ENCODE measurements at regions of chr20 and their contacts with region 1.

Region 1: GRCh38 chr20:19661717-19662636 is 96.1 kb upstream of the RIN2 start:
- DNase-seq: peak; percentile 56
- ATAC-seq: peak; percentile 80
- H3K4me3 ChIP-seq: no peak overlapping the region
- H3K27ac ChIP-seq: no peak overlapping the region
- H3K4me1 ChIP-seq: no peaks in the 10 kb centered on the region
- H3K27me3 ChIP-seq: peaks cover 40% of the 10 kb centered on the region
- CTCF ChIP-seq: peak; percentile 70 to 99 (median 95); a peak in 5 of 6 replicates
- POLR2A ChIP-seq: no peak
- RAD21 ChIP-seq: peak; percentile 84

Region 2: GRCh38 chr20:18412221-18412901 is 1249.6 kb before region 1 on chr20:
- CTCF ChIA-PET with region 1: no interaction called
- POLR2A ChIA-PET with region 1: no interaction called
- RAD21 ChIA-PET with region 1: no interaction called
- intact Hi-C with region 1: loop called (anchors 1 kb)
- DNase-seq: no peak
- ATAC-seq: no peak
- H3K4me3 ChIP-seq: no peak overlapping the region
- H3K27ac ChIP-seq: no peak overlapping the region
- H3K4me1 ChIP-seq: no peaks in the 10 kb centered on the region
- H3K27me3 ChIP-seq: no peaks in the 10 kb centered on the region
- CTCF ChIP-seq: no peak
- POLR2A ChIP-seq: no peak
- RAD21 ChIP-seq: no peak

Region 3: DNA sequence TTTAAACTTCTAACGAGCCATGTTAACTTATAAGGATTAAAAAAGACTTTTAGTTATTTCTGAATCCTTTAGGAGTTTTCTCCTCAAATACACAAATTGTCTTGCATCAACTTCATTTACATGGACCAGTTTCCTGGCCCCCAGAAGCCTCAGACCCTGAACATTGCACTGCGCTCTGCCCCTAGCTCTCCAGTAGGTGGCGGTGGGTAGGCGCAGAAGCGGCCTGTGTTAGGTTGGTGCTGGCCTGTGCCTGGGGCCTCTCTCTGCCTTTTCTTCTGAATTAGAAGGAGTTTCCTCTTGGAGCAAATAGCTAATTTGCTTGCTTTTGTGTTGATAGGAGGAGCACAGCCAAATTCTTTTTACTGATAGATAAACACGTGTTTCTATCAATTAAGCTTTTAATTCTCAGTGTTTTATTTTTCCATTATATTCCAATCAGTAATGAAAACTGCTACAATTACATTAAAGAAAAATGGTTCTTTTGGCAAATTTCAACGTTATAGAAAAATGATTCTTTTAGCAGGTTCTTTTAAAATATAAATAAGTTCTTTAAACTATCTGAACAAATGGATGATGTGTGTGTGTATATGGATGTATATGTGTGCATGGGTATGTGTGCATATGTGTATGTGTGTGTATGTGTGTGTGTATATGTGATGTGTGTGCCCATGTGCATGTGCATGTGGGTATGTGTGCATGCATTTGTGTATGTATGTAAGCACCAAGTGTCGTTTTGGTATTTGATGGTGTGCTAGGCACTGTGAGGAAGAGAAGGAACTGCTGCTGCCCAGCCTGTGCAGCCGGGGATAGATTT is 1029.6 kb before region 1 on chr20:
- CTCF ChIA-PET with region 1: interaction called, 3 read pairs
- POLR2A ChIA-PET with region 1: no interaction called
- RAD21 ChIA-PET with region 1: no interaction called
- intact Hi-C with region 1: loop called (anchors 2 kb)
- DNase-seq: peak; percentile 34
- ATAC-seq: peak; percentile 98
- H3K4me3 ChIP-seq: no peak overlapping the region
- H3K27ac ChIP-seq: no peak overlapping the region
- H3K4me1 ChIP-seq: no peaks in the 10 kb centered on the region
- H3K27me3 ChIP-seq: no peaks in the 10 kb centered on the region
- CTCF ChIP-seq: peak; percentile 39 to 95 (median 93); a peak in 5 of 6 replicates
- POLR2A ChIP-seq: no peak
- RAD21 ChIP-seq: peak; percentile 75

Region 4: GRCh38 chr20:19560881-19561480 is 101.0 kb before region 1 on chr20:
- CTCF ChIA-PET with region 1: no interaction called
- POLR2A ChIA-PET with region 1: no interaction called
- RAD21 ChIA-PET with region 1: no interaction called
- intact Hi-C with region 1: no loop called
- DNase-seq: no peak
- ATAC-seq: no peak
- H3K4me3 ChIP-seq: no peak overlapping the region
- H3K27ac ChIP-seq: no peak overlapping the region
- H3K4me1 ChIP-seq: no peaks in the 10 kb centered on the region
- H3K27me3 ChIP-seq: peaks cover 3% of the 10 kb centered on the region; the same call in 1 of the 2 replicates
- CTCF ChIP-seq: no peak
- POLR2A ChIP-seq: no peak
- RAD21 ChIP-seq: no peak

Region 5: GRCh38 chr20:19589787-19590362 is 72.1 kb before region 1 on chr20:
- CTCF ChIA-PET with region 1: interaction called, 6 read pairs
- POLR2A ChIA-PET with region 1: no interaction called
- RAD21 ChIA-PET with region 1: no interaction called
- intact Hi-C with region 1: loop called (anchors 5 kb)
- DNase-seq: no peak
- ATAC-seq: no peak
- H3K4me3 ChIP-seq: no peak overlapping the region
- H3K27ac ChIP-seq: no peak overlapping the region
- H3K4me1 ChIP-seq: no peaks in the 10 kb centered on the region
- H3K27me3 ChIP-seq: peaks cover 30% of the 10 kb centered on the region; the same call in 1 of the 2 replicates
- CTCF ChIP-seq: no peak
- POLR2A ChIP-seq: no peak
- RAD21 ChIP-seq: no peak

Region 6: DNA sequence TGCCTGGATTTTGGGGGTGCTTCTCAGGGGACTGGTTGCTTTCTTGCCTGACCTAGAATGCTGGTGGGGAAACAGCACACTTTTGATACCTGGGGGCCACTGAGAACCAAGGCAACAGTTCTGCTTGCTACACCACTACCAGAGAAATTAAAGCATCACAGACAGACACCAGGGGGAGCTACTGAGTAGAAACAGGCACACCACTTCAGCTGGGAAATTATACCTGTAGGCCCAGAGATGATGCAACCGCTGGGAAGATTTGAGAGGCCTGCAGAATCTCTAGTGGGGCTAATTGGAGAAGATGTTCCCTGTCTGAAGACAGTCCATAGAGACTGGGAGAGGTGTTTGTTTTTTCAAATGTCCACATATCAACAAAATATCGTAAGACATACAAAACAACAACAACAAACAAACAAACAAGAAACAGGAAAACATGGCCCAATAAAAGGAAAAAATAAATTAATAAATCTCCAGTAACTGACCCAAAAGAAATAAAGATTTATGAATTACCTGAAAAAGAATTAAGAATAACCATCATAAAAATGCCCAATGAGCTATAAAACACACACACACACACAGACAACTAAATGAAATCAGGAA is 33.3 kb before region 1 on chr20:
- CTCF ChIA-PET with region 1: interaction called, 11 read pairs
- POLR2A ChIA-PET with region 1: no interaction called
- RAD21 ChIA-PET with region 1: no interaction called
- intact Hi-C with region 1: loop called (anchors 1 kb)
- DNase-seq: peak; percentile 81
- ATAC-seq: peak; percentile 93
- H3K4me3 ChIP-seq: no peak overlapping the region
- H3K27ac ChIP-seq: no peak overlapping the region
- H3K4me1 ChIP-seq: no peaks in the 10 kb centered on the region
- H3K27me3 ChIP-seq: no peaks in the 10 kb centered on the region
- CTCF ChIP-seq: peak; percentile 61 to 80 (median 80); a peak in 5 of 6 replicates
- POLR2A ChIP-seq: no peak
- RAD21 ChIP-seq: peak; percentile 51

Measured in HCT116 (cell line).